ENCODE measurements at regions of chr11 and their contacts with region 1.

Region 1: DNA sequence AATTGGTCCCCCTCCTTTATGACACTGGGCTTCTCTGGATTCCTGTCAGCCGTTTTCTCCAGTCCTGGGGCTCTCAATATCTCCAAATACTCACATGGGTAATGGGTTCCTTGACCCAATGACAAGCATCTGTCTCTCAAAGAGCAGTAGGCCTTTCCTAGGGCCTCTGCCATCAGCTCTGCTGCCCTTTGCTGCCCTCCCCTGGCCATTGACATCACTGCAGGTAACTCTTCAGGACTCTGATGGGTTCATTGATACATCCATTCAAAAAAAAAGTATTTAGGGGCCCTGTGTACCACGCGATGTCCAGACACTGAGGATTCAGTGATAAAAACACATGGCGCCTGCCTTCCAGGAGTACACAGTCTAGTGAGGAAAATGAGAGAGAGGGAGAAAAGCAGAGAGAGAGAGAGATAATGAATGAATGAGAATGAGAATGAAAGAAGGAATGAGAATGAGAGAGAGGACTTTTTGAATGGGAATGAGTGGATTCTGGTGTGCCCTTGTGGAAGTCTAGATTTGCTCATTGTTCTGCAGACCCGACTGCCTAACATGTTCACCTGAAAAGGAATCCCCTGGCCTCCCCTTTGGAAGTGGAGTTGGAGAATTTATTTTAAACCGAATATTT is 42.6 kb upstream of the OLFML1 start:
- DNase-seq: peak; percentile 74
- CTCF ChIP-seq: peak; percentile 89

Region 2: GRCh38 chr11:7098235-7098832 is 344.4 kb before region 1 on chr11:
- CTCF ChIA-PET with region 1: interaction called, 48 read pairs
- POLR2A ChIA-PET with region 1: no interaction called
- DNase-seq: peak; percentile 50
- CTCF ChIP-seq: peak; percentile 66

Region 3: GRCh38 chr11:7353100-7353499 is 89.6 kb before region 1 on chr11:
- CTCF ChIA-PET with region 1: interaction called, 78 read pairs
- POLR2A ChIA-PET with region 1: no interaction called
- DNase-seq: peak; percentile 51
- CTCF ChIP-seq: peak; percentile 67

Region 4: GRCh38 chr11:7457211-7457610 is 14.5 kb after region 1 on chr11:
- CTCF ChIA-PET with region 1: interaction called, 76 read pairs
- POLR2A ChIA-PET with region 1: no interaction called
- DNase-seq: no peak
- CTCF ChIP-seq: no peak

Region 5: GRCh38 chr11:7490054-7490453 is 47.4 kb after region 1 on chr11:
- CTCF ChIA-PET with region 1: interaction called, 12 read pairs
- POLR2A ChIA-PET with region 1: no interaction called
- DNase-seq: no peak
- CTCF ChIP-seq: no peak

Region 6: GRCh38 chr11:7513234-7514098 is 70.8 kb after region 1 on chr11 and contains the start of gene PPFIBP2:
- CTCF ChIA-PET with region 1: no interaction called
- POLR2A ChIA-PET with region 1: no interaction called
- DNase-seq: peak; percentile 92
- CTCF ChIP-seq: peak; percentile 60